CD8-positive, alpha-beta T cell (primary cell): ENCODE measurements at regions of chr15 and their contacts with region 1.

Region 1: GRCh38 chr15:50265620-50266019 is at the start of gene HDC:
- DNase-seq: no peak
- ATAC-seq: no peak
- H3K4me3 ChIP-seq: no peak within 1 kb of the TSS
- H3K4me3 Mint-ChIP-seq: no peak within 1 kb of the TSS
- H3K27ac ChIP-seq: no peak within 1 kb of the TSS
- H3K27ac Mint-ChIP-seq: no peak within 1 kb of the TSS
- H3K4me1 ChIP-seq: peaks cover 13% of the 10 kb centered on the region
- H3K4me1 Mint-ChIP-seq: peaks cover 26% of the 10 kb centered on the region
- H3K27me3 ChIP-seq: no peaks in the 10 kb centered on the region
- H3K27me3 Mint-ChIP-seq: peaks cover 4% of the 10 kb centered on the region
- CTCF ChIP-seq: no peak
- total RNA-seq, gene HDC: not detected

Region 2: DNA sequence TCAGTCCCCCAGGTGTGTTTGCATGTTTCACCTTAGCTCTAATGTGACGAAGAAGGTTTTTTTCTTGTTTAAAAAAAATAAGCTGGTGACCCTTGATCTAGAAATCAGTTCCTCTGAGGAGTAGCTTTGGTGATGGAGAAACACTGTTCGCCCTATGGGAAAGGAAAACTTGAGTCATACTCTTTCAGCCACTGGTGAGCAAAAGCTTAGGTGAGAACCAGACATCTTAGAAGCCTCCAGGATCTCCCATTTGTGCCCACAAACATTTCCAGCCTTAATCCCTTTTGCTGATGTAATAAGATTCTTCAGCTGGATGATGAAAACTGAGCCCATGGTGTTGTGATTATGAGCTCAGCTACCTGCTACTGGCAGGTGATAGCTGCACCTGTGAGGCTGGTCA is 45.8 kb before region 1 on chr15:
- CTCF ChIA-PET with region 1: no interaction called
- POLR2A ChIA-PET with region 1: no interaction called
- intact Hi-C with region 1: loop called in 1 of 2 experiments (anchors 5 kb)
- DNase-seq: no peak
- ATAC-seq: no peak
- H3K4me3 ChIP-seq: no peak overlapping the region
- H3K4me3 Mint-ChIP-seq: no peak overlapping the region
- H3K27ac ChIP-seq: no peak overlapping the region
- H3K27ac Mint-ChIP-seq: no peak overlapping the region
- H3K4me1 ChIP-seq: no peaks in the 10 kb centered on the region
- H3K4me1 Mint-ChIP-seq: no peaks in the 10 kb centered on the region
- H3K27me3 ChIP-seq: no peaks in the 10 kb centered on the region
- H3K27me3 Mint-ChIP-seq: no peaks in the 10 kb centered on the region
- CTCF ChIP-seq: no peak

Region 3: DNA sequence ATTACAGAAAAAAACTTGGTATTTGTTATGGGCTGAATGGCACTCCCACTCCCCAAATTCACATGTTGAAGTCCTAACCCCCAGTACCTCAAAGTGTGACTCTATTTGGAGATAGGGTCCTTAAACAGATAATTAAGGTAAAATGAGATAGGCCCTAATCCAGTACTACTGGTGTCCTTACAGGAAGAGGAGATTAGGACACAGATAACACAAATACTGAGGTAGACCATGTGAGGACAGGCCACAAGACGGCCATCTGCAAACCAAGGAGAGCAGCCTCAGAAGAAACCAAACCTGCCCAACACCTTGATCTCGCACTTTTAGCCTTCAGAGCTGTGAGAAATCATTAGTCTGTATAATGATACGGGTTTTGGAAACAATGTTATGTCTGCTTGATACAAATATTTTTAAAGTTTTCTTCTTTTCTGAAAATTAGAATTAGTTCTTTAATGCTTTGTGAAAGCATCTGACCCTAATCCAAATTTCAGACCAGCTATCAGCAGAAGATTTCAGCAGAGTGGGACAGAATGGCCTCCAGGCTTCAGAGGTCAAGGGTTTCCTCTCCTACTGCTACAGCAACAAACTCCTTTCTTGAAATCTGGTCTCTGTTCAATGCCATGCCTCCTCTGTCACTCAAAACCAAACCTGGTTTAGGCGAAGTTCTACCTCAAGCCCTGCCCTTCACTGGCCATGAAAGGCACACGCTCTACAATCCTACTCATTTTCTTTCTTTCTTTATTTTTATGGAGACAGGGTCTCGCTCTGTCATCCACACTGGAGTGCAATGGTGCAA is 21.9 kb after region 1 on chr15:
- CTCF ChIA-PET with region 1: no interaction called
- POLR2A ChIA-PET with region 1: no interaction called
- intact Hi-C with region 1: no loop called
- DNase-seq: no peak
- ATAC-seq: no peak
- H3K4me3 ChIP-seq: no peak overlapping the region
- H3K4me3 Mint-ChIP-seq: no peak overlapping the region
- H3K27ac ChIP-seq: no peak overlapping the region
- H3K27ac Mint-ChIP-seq: no peak overlapping the region
- H3K4me1 ChIP-seq: no peaks in the 10 kb centered on the region
- H3K4me1 Mint-ChIP-seq: no peaks in the 10 kb centered on the region
- H3K27me3 ChIP-seq: no peaks in the 10 kb centered on the region
- H3K27me3 Mint-ChIP-seq: no peaks in the 10 kb centered on the region
- CTCF ChIP-seq: no peak

Region 4: DNA sequence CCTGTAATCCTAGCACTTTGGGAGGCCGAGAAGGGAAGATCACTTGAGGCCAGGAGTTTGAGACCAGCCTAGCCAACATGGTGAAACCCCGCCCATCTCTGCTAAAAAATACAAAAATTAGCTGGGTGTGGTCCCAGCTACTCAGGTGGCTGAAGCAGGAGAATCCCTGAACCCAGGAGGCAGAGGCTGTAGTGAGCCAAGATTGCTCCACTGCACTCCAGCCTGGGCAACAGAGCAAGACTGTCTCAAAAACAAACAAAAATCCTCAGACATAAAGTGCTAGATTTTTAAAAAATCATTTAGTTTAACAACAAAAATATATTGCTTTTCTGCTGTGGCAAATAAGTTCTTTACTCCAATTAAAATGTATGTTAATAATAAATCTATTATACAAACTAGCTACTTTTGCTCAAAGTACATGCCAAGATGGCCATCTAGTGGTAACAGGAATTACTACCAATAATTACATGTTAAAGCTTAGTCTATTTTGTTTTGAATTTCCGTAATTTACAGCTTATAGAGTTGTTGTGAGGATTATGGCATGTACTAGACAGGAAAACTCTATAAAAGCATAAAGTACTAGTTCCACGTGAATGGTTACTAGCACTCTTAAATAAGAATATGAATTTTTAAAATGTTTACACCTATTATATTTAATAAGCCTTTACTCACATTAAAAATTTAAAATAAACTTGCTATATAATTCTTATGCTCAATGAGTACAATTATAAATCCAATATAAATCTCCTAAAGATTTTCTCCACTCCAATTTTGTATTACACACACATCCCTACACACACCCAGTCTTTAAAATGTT is 50.4 kb after region 1 on chr15:
- CTCF ChIA-PET with region 1: no interaction called
- POLR2A ChIA-PET with region 1: no interaction called
- intact Hi-C with region 1: no loop called
- DNase-seq: peak in 2 of 9 experiments; percentile 58 to 71
- ATAC-seq: peak; percentile 29
- H3K4me3 ChIP-seq: no peak overlapping the region
- H3K4me3 Mint-ChIP-seq: no peak overlapping the region
- H3K27ac ChIP-seq: no peak overlapping the region
- H3K27ac Mint-ChIP-seq: no peak overlapping the region
- H3K4me1 ChIP-seq: no peaks in the 10 kb centered on the region
- H3K4me1 Mint-ChIP-seq: peaks cover 19% of the 10 kb centered on the region
- H3K27me3 ChIP-seq: no peaks in the 10 kb centered on the region
- H3K27me3 Mint-ChIP-seq: no peaks in the 10 kb centered on the region
- CTCF ChIP-seq: peak; percentile 97